ENCODE measurements at regions of chr1 and their contacts with region 1.

Region 1: DNA sequence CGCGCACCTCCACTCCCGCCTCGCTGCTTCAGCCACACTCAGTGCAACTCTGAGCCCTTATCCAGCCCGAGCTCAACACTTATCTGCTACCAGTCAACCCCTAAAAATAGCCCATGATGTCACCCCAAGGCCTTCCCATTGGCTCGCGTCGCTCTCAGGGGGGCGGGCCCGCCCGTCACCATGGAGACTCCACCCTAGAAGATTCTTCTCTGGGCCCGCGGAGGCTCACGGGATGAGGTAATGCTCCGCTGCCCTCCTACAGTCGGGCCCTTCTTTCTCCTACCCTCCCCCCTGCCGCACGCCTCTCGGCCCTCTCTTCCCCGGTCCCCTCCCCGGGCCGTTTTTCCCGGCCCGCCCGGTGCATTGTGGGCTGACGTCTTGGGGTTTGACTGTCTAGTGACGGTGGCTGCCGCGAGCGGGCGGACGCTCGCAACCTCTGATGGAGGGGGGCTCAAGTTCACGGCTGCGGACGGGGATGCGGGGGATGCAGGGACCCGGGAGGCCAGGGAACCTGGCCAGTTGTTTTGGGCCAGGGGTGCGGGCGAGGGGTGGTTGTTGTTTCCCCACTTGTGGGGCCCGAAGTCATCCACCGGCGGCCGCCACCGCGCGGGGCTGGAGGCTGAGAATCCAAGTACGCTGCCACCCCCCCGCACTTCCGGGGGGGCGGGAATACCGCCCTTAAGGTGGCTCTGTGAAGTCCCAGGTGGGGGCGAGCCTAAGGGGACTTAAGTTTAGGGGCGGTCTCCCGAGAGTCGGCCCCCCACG is at the start of gene JUN:
- DNase-seq: peak; percentile 93
- ATAC-seq: peak; percentile 72
- H3K4me3 Mint-ChIP-seq: peak within 1 kb of the TSS; percentile 96
- H3K27ac Mint-ChIP-seq: peak within 1 kb of the TSS; percentile 99
- H3K4me1 Mint-ChIP-seq: peaks cover 38% of the 10 kb centered on the region
- H3K27me3 Mint-ChIP-seq: no peaks in the 10 kb centered on the region
- CTCF ChIP-seq: no peak
- total RNA-seq, gene JUN: 35.3 and 36.6 TPM in 2 replicates

Region 2: GRCh38 chr1:58773406-58773840 is 10.8 kb before region 1 on chr1:
- CTCF ChIA-PET with region 1: interaction called, 9 read pairs
- POLR2A ChIA-PET with region 1: interaction called, 43 read pairs
- intact Hi-C with region 1: no loop called
- DNase-seq: peak; percentile 24
- ATAC-seq: peak; percentile 89
- H3K4me3 Mint-ChIP-seq: no peak overlapping the region
- H3K27ac Mint-ChIP-seq: peak overlapping the region; percentile 73
- H3K4me1 Mint-ChIP-seq: peaks cover 19% of the 10 kb centered on the region
- H3K27me3 Mint-ChIP-seq: peaks cover 6% of the 10 kb centered on the region
- CTCF ChIP-seq: no peak

Region 3: GRCh38 chr1:58903514-58904298 is 119.5 kb after region 1 on chr1:
- CTCF ChIA-PET with region 1: interaction called, 4 read pairs
- POLR2A ChIA-PET with region 1: interaction called, 9 read pairs
- intact Hi-C with region 1: loop called (anchors 1 kb)
- DNase-seq: peak; percentile 75
- ATAC-seq: peak; percentile 90
- H3K4me3 Mint-ChIP-seq: peak overlapping the region; percentile 84
- H3K27ac Mint-ChIP-seq: peak overlapping the region; percentile 81
- H3K4me1 Mint-ChIP-seq: peaks cover 16% of the 10 kb centered on the region
- H3K27me3 Mint-ChIP-seq: no peaks in the 10 kb centered on the region
- CTCF ChIP-seq: no peak

Region 4: DNA sequence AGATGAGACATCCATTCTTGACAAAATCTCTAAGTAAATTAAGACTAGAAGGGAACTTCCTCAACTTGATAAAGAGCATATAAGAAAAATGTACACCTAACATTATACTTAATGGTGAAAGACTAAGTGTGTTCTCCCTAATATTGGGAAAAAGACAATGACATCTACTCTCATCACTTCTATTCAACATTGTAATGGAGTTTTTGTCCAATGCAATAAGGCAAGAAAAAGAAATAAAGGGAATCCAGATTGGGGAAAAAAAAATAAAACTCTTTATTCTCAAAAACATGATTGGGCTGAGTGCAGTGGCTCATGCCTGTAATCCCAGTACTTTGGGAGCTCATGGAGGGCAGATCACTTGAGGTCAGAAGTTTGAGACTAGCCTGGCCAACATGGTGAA is 130.8 kb after region 1 on chr1:
- CTCF ChIA-PET with region 1: no interaction called
- POLR2A ChIA-PET with region 1: no interaction called
- intact Hi-C with region 1: no loop called
- DNase-seq: no peak
- ATAC-seq: no peak
- H3K4me3 Mint-ChIP-seq: no peak overlapping the region
- H3K27ac Mint-ChIP-seq: no peak overlapping the region
- H3K4me1 Mint-ChIP-seq: no peaks in the 10 kb centered on the region
- H3K27me3 Mint-ChIP-seq: no peaks in the 10 kb centered on the region
- CTCF ChIP-seq: no peak

Region 5: GRCh38 chr1:59046730-59047157 is 262.6 kb after region 1 on chr1:
- CTCF ChIA-PET with region 1: interaction called, 6 read pairs
- POLR2A ChIA-PET with region 1: interaction called, 26 read pairs
- intact Hi-C with region 1: loop called (anchors 1 kb)
- DNase-seq: peak; percentile 22
- ATAC-seq: peak; percentile 96
- H3K4me3 Mint-ChIP-seq: no peak overlapping the region
- H3K27ac Mint-ChIP-seq: peak overlapping the region; percentile 91
- H3K4me1 Mint-ChIP-seq: peaks cover 31% of the 10 kb centered on the region
- H3K27me3 Mint-ChIP-seq: no peaks in the 10 kb centered on the region
- CTCF ChIP-seq: no peak

Region 6: GRCh38 chr1:59290193-59290947 is 506.2 kb after region 1 on chr1:
- CTCF ChIA-PET with region 1: interaction called, 7 read pairs
- POLR2A ChIA-PET with region 1: interaction called, 74 read pairs
- intact Hi-C with region 1: loop called (anchors 1 kb)
- DNase-seq: no peak
- ATAC-seq: peak; percentile 67
- H3K4me3 Mint-ChIP-seq: no peak overlapping the region
- H3K27ac Mint-ChIP-seq: peak overlapping the region; percentile 15
- H3K4me1 Mint-ChIP-seq: peaks cover 37% of the 10 kb centered on the region
- H3K27me3 Mint-ChIP-seq: no peaks in the 10 kb centered on the region
- CTCF ChIP-seq: no peak

Region 7: GRCh38 chr1:59699227-59699847 is 915.2 kb after region 1 on chr1:
- CTCF ChIA-PET with region 1: interaction called, 36 read pairs
- POLR2A ChIA-PET with region 1: interaction called, 24 read pairs
- intact Hi-C with region 1: loop called (anchors 1 kb)
- DNase-seq: no peak
- ATAC-seq: peak; percentile 49
- H3K4me3 Mint-ChIP-seq: no peak overlapping the region
- H3K27ac Mint-ChIP-seq: peak overlapping the region; percentile 50
- H3K4me1 Mint-ChIP-seq: peaks cover 30% of the 10 kb centered on the region
- H3K27me3 Mint-ChIP-seq: no peaks in the 10 kb centered on the region
- CTCF ChIP-seq: peak; percentile 50